ENCODE measurements at regions of chr14 and their contacts with region 1.

Region 1: GRCh38 chr14:74362361-74362915 is 14.2 kb downstream of the VRTN start:
- DNase-seq: peak; percentile 90
- ATAC-seq: peak; percentile 89

Region 2: GRCh38 chr14:74244115-74244514 is 118.3 kb before region 1 on chr14:
- intact Hi-C with region 1: no loop called
- DNase-seq: no peak
- ATAC-seq: no peak

Region 3: GRCh38 chr14:74488786-74489397 is 126.5 kb after region 1 on chr14:
- intact Hi-C with region 1: loop called (anchors 10 kb)
- DNase-seq: no peak
- ATAC-seq: no peak

Measured in sciatic nerve (tissue), 2 donors.